B cell (primary cell): ENCODE measurements at regions of chr5 and their contacts with region 1.

Region 1: GRCh38 chr5:54310433-54311175 is at the start of gene ARL15:
- DNase-seq: peak; percentile 96
- ATAC-seq: peak; percentile 96
- H3K4me3 ChIP-seq: peak within 1 kb of the TSS; percentile 73 to 100 (median 88)
- H3K4me3 Mint-ChIP-seq: peak within 1 kb of the TSS; percentile 96
- H3K27ac ChIP-seq: peak within 1 kb of the TSS; percentile 49 to 80
- H3K27ac Mint-ChIP-seq: peak within 1 kb of the TSS; percentile 90
- H3K4me1 ChIP-seq: peaks cover 8 to 20% of the 10 kb centered on the region in 2 donors
- H3K4me1 Mint-ChIP-seq: peaks cover 24% of the 10 kb centered on the region
- H3K27me3 ChIP-seq: peaks cover 0 to 6% (median 3%) of the 10 kb centered on the region in 4 experiments
- H3K27me3 Mint-ChIP-seq: peaks cover 12% of the 10 kb centered on the region
- CTCF ChIP-seq: no peak
- total RNA-seq, gene ARL15: 20.5 and 25.4 TPM in 2 replicates

Region 2: DNA sequence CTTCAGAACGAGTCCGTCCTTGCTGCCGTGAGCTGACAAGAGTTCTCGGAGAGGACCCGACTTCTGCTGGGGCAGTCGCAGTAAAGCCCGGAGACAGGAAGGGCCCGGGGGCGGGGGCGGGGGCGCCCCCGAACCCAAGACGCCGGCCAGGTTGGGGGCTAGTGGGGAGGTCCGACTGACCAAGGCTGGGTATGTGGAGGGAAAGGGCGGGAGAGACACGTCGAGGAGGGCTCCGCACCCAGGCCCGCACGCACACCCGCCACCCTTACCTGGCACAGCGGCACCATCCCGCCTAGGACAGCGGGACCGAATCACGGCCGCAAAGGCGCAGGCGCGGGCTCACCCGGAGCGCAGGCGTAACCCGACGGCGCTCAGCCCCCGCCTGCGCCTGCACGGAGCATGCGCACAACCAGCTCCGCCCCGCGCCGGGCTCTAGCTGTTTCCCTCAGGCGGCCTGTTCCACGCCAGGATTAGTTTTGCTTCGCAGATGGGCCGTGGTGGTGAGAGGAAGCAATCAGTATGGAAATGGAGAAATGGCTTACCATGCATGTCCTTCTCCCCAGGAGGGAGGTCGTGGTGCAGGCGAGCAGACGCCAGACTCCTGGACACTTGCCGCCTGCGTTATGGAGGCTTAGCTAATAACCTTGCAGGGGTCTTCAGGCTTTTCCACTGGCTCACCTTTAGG is 1201.0 kb before region 1 on chr5 and contains the start of gene MOCS2:
- CTCF ChIA-PET with region 1: no interaction called
- POLR2A ChIA-PET with region 1: no interaction called
- intact Hi-C with region 1: loop called (anchors 2 kb)
- DNase-seq: peak; percentile 93
- ATAC-seq: peak; percentile 96
- H3K4me3 ChIP-seq: peak within 1 kb of the TSS; percentile 65 to 84 (median 79)
- H3K4me3 Mint-ChIP-seq: peak within 1 kb of the TSS; percentile 98
- H3K27ac ChIP-seq: peak within 1 kb of the TSS; percentile 71 to 78
- H3K27ac Mint-ChIP-seq: peak within 1 kb of the TSS; percentile 92
- H3K4me1 ChIP-seq: peaks cover 9 to 11% of the 10 kb centered on the region in 2 donors
- H3K4me1 Mint-ChIP-seq: peaks cover 44% of the 10 kb centered on the region
- H3K27me3 ChIP-seq: no peaks in the 10 kb centered on the region
- H3K27me3 Mint-ChIP-seq: no peaks in the 10 kb centered on the region
- CTCF ChIP-seq: no peak
- total RNA-seq, gene MOCS2: 14.9 and 15.3 TPM in 2 replicates

Region 3: GRCh38 chr5:54415896-54416601 is 105.4 kb after region 1 on chr5:
- CTCF ChIA-PET with region 1: interaction called, 13 read pairs
- POLR2A ChIA-PET with region 1: no interaction called
- intact Hi-C with region 1: loop called (anchors 2 kb)
- DNase-seq: no peak
- ATAC-seq: no peak
- H3K4me3 ChIP-seq: no peak overlapping the region
- H3K4me3 Mint-ChIP-seq: no peak overlapping the region
- H3K27ac ChIP-seq: no peak overlapping the region
- H3K27ac Mint-ChIP-seq: no peak overlapping the region
- H3K4me1 ChIP-seq: no peaks in the 10 kb centered on the region
- H3K4me1 Mint-ChIP-seq: no peaks in the 10 kb centered on the region
- H3K27me3 ChIP-seq: peaks cover 0 to 4% (median 0%) of the 10 kb centered on the region in 4 experiments
- H3K27me3 Mint-ChIP-seq: peaks cover 27% of the 10 kb centered on the region
- CTCF ChIP-seq: no peak

Region 4: DNA sequence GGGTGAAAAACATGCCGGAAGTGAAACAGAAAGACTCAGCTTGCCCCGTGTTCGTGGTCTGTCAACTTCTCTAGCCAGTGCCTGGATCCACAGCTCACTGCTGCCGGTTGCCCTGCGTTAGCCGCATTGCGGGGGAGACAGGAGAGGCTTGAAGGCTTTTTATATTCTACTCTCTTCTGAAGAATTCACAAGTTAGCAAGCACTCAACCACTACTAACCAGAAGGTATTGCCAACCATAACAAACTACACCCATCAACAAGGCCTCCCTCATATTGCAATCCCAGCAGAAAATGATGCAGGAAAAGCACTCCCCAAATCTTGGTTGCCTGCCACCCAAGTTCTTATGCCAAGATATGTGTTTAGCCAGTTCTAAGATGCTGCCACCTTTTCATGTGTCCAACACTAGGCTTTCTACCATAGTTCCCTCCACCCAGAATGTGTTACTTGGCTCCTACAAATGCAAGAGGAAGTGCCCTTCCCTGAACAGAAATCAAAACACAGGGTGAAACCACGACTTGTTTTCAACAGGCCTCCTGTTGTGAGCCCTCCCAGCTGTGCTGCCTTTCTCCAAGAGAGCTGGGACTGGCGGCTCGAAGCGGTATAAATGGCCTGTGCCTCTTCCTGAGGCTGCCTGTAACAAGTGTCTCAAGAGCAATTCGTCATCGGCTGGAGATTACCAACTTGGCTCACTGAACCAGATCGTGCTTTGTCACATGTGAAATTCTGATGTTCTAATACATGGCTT is 335.9 kb after region 1 on chr5:
- CTCF ChIA-PET with region 1: no interaction called
- POLR2A ChIA-PET with region 1: interaction called, 11 read pairs
- intact Hi-C with region 1: loop called (anchors 10 kb)
- DNase-seq: peak; percentile 88
- ATAC-seq: peak; percentile 89
- H3K4me3 ChIP-seq: peak overlapping the region; percentile 7 to 49 (median 41)
- H3K4me3 Mint-ChIP-seq: peak overlapping the region; percentile 79
- H3K27ac ChIP-seq: peak overlapping the region; percentile 87 to 88
- H3K27ac Mint-ChIP-seq: peak overlapping the region; percentile 98
- H3K4me1 ChIP-seq: peaks cover 61 to 67% of the 10 kb centered on the region in 2 donors
- H3K4me1 Mint-ChIP-seq: peaks cover 68% of the 10 kb centered on the region
- H3K27me3 ChIP-seq: no peaks in the 10 kb centered on the region
- H3K27me3 Mint-ChIP-seq: no peaks in the 10 kb centered on the region
- CTCF ChIP-seq: no peak

Region 5: GRCh38 chr5:54867310-54867944 is 556.8 kb after region 1 on chr5:
- CTCF ChIA-PET with region 1: interaction called, 4 read pairs
- POLR2A ChIA-PET with region 1: no interaction called
- intact Hi-C with region 1: loop called (anchors 2 kb)
- DNase-seq: peak; percentile 75
- ATAC-seq: peak; percentile 60
- H3K4me3 ChIP-seq: peak overlapping the region in 3 of 5 experiments; percentile 11 to 32 (median 20)
- H3K4me3 Mint-ChIP-seq: peak overlapping the region; percentile 32
- H3K27ac ChIP-seq: no peak overlapping the region
- H3K27ac Mint-ChIP-seq: no peak overlapping the region
- H3K4me1 ChIP-seq: peaks cover 3 to 5% of the 10 kb centered on the region in 2 donors
- H3K4me1 Mint-ChIP-seq: peaks cover 6% of the 10 kb centered on the region
- H3K27me3 ChIP-seq: peaks cover 0 to 5% (median 2%) of the 10 kb centered on the region in 4 experiments
- H3K27me3 Mint-ChIP-seq: peaks cover 34% of the 10 kb centered on the region
- CTCF ChIP-seq: peak; percentile 81

Region 6: GRCh38 chr5:55307383-55308253 is 997.0 kb after region 1 on chr5 and contains the starts of genes DHX29 and MTREX:
- CTCF ChIA-PET with region 1: no interaction called
- POLR2A ChIA-PET with region 1: no interaction called
- intact Hi-C with region 1: loop called (anchors 10 kb)
- DNase-seq: peak; percentile 93
- ATAC-seq: peak; percentile 91
- H3K4me3 ChIP-seq: peak within 1 kb of the TSS; percentile 68 to 99 (median 96)
- H3K4me3 Mint-ChIP-seq: no peak within 1 kb of the TSS
- H3K27ac ChIP-seq: peak within 1 kb of the TSS; percentile 88 to 98
- H3K27ac Mint-ChIP-seq: no peak within 1 kb of the TSS
- H3K4me1 ChIP-seq: peaks cover 45 to 46% of the 10 kb centered on the region in 2 donors
- H3K4me1 Mint-ChIP-seq: peaks cover 33% of the 10 kb centered on the region
- H3K27me3 ChIP-seq: no peaks in the 10 kb centered on the region
- H3K27me3 Mint-ChIP-seq: no peaks in the 10 kb centered on the region
- CTCF ChIP-seq: no peak
- total RNA-seq, gene DHX29: 17.9 and 18.1 TPM in 2 replicates
- total RNA-seq, gene MTREX: 91.7 and 94.0 TPM in 2 replicates

Region 7: GRCh38 chr5:55994574-55995333 is 1684.2 kb after region 1 on chr5 and contains the start of gene IL6ST:
- CTCF ChIA-PET with region 1: no interaction called
- POLR2A ChIA-PET with region 1: no interaction called
- intact Hi-C with region 1: loop called (anchors 10 kb)
- DNase-seq: peak; percentile 96
- ATAC-seq: peak; percentile 94
- H3K4me3 ChIP-seq: peak within 1 kb of the TSS; percentile 75 to 97 (median 91)
- H3K4me3 Mint-ChIP-seq: peak within 1 kb of the TSS; percentile 89
- H3K27ac ChIP-seq: peak within 1 kb of the TSS; percentile 75 to 94
- H3K27ac Mint-ChIP-seq: peak within 1 kb of the TSS; percentile 78
- H3K4me1 ChIP-seq: peaks cover 11 to 18% of the 10 kb centered on the region in 2 donors
- H3K4me1 Mint-ChIP-seq: peaks cover 33% of the 10 kb centered on the region
- H3K27me3 ChIP-seq: no peaks in the 10 kb centered on the region
- H3K27me3 Mint-ChIP-seq: peaks cover 4% of the 10 kb centered on the region
- CTCF ChIP-seq: no peak
- total RNA-seq, gene IL6ST: 28.0 and 31.1 TPM in 2 replicates